Mammary epithelial cell (primary cell): ENCODE measurements at regions of chr11 and their contacts with region 1.

Region 1: GRCh38 chr11:94623120-94623735 is 56.1 kb downstream of the PIWIL4 start:
- DNase-seq: peak; percentile 70
- H3K4me3 ChIP-seq: no peak overlapping the region
- H3K27ac ChIP-seq: no peak overlapping the region
- H3K4me1 ChIP-seq: no peaks in the 10 kb centered on the region
- H3K27me3 ChIP-seq: no peaks in the 10 kb centered on the region
- CTCF ChIP-seq: peak; percentile 91 to 94

Region 2: GRCh38 chr11:94543695-94544645 is 79.3 kb before region 1 on chr11 and contains the start of gene FUT4:
- CTCF ChIA-PET with region 1: no interaction called
- dilution Hi-C with region 1: no loop called
- in situ Hi-C with region 1: no loop called
- intact Hi-C with region 1: no loop called
- DNase-seq: peak; percentile 70
- H3K4me3 ChIP-seq: peak within 1 kb of the TSS; percentile 32 to 49 (median 46)
- H3K27ac ChIP-seq: peak within 1 kb of the TSS; percentile 51
- H3K4me1 ChIP-seq: peaks cover 16% of the 10 kb centered on the region
- H3K27me3 ChIP-seq: no peaks in the 10 kb centered on the region
- CTCF ChIP-seq: no peak
- total RNA-seq, gene FUT4: 0.33 to 1.2 TPM

Region 3: GRCh38 chr11:94767761-94768601 is 144.8 kb after region 1 on chr11 and contains the start of gene AMOTL1:
- CTCF ChIA-PET with region 1: interaction called, 3 read pairs
- dilution Hi-C with region 1: no loop called
- in situ Hi-C with region 1: loop called in 1 of 2 experiments (anchors 5 kb)
- intact Hi-C with region 1: loop called (anchors 2 kb)
- DNase-seq: peak; percentile 87
- H3K4me3 ChIP-seq: peak within 1 kb of the TSS; percentile 52 to 89 (median 64)
- H3K27ac ChIP-seq: peak within 1 kb of the TSS; percentile 91
- H3K4me1 ChIP-seq: peaks cover 47% of the 10 kb centered on the region
- H3K27me3 ChIP-seq: no peaks in the 10 kb centered on the region
- CTCF ChIP-seq: peak in 1 of 2 donors; percentile 23
- total RNA-seq, gene AMOTL1: 181 to 201 TPM

Region 4: GRCh38 chr11:94897330-94897768 is 274.1 kb after region 1 on chr11:
- CTCF ChIA-PET with region 1: interaction called, 3 read pairs
- dilution Hi-C with region 1: no loop called
- in situ Hi-C with region 1: loop called in 1 of 2 experiments (anchors 25 kb)
- intact Hi-C with region 1: loop called (anchors 1 kb)
- DNase-seq: peak; percentile 21
- H3K4me3 ChIP-seq: no peak overlapping the region
- H3K27ac ChIP-seq: no peak overlapping the region
- H3K4me1 ChIP-seq: peaks cover 6% of the 10 kb centered on the region
- H3K27me3 ChIP-seq: no peaks in the 10 kb centered on the region
- CTCF ChIP-seq: peak; percentile 73 to 89

Region 5: DNA sequence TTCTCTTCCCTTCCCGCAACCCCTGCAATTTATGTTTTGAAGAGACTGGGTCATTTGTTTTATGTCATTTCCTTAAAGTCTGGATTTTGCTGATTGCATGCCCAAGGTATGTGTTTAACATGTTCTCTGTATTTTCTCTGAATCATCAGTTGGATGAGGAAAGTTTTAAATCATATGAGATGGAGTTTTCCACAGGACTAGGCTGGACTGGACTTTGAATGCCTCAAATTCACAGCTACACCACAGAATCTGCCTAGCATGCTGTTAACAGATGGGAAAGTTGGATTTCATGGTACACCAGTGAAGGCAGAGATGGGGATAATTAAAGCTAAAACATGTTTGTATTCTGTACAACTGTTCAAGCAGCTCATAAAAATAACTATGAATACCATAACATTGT is 287.6 kb after region 1 on chr11:
- CTCF ChIA-PET with region 1: no interaction called
- dilution Hi-C with region 1: no loop called
- in situ Hi-C with region 1: loop called in 1 of 2 experiments (anchors 25 kb)
- intact Hi-C with region 1: no loop called
- DNase-seq: no peak
- H3K4me3 ChIP-seq: no peak overlapping the region
- H3K27ac ChIP-seq: no peak overlapping the region
- H3K4me1 ChIP-seq: no peaks in the 10 kb centered on the region
- H3K27me3 ChIP-seq: no peaks in the 10 kb centered on the region
- CTCF ChIP-seq: no peak

Region 6: DNA sequence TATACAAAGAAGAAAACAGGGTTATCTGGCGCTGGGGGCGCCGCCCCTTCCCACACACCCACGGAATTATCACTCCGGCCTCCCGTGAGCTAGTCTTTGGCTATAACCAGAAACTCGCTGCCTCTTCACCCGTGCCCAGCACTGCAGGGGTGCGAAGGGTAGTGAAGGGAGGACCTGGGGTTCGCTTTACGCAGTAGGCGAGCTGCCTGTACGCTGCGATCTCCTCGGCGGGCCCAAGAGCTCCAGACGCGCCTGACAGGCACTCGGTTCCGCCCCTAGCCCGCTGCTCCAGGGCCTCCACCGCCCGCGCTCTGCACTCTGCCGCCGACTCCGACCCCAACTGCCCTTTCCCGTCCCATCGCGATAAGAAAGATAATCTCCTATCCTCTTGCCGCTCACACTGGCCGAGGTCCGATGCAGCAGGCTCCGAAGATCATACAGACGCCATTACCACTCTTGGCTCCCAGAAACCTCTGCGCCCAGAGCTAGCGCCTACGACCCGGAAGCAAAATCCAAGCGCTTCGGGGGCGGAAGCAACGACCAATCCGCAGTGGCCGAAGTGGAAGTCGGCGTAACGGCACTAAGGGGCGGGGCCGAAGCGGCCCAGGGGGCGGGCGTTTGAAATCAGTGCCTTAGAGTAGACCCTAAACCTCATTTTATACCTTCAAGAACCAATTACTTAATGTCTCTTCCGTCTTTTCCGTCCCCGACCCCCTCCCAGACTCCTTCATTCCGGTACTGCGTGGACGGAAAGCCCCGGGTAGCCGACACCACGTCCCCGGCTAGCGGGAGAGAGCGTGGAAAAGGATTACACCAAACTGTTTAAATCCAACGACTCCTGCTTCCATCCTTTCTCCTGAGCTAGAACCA is 350.1 kb after region 1 on chr11 and contains the starts of genes CWC15 and KDM4D:
- CTCF ChIA-PET with region 1: interaction called, 10 read pairs
- dilution Hi-C with region 1: no loop called
- in situ Hi-C with region 1: loop called in 1 of 2 experiments (anchors 10 kb)
- intact Hi-C with region 1: loop called (anchors 1 kb)
- DNase-seq: peak; percentile 90
- H3K4me3 ChIP-seq: peak within 1 kb of the TSS; percentile 86 to 99 (median 89)
- H3K27ac ChIP-seq: peak within 1 kb of the TSS; percentile 80
- H3K4me1 ChIP-seq: peaks cover 9% of the 10 kb centered on the region
- H3K27me3 ChIP-seq: no peaks in the 10 kb centered on the region
- CTCF ChIP-seq: no peak
- total RNA-seq, gene CWC15: 27.5 to 46.5 TPM
- total RNA-seq, gene KDM4D: 1.0 TPM

Region 7: DNA sequence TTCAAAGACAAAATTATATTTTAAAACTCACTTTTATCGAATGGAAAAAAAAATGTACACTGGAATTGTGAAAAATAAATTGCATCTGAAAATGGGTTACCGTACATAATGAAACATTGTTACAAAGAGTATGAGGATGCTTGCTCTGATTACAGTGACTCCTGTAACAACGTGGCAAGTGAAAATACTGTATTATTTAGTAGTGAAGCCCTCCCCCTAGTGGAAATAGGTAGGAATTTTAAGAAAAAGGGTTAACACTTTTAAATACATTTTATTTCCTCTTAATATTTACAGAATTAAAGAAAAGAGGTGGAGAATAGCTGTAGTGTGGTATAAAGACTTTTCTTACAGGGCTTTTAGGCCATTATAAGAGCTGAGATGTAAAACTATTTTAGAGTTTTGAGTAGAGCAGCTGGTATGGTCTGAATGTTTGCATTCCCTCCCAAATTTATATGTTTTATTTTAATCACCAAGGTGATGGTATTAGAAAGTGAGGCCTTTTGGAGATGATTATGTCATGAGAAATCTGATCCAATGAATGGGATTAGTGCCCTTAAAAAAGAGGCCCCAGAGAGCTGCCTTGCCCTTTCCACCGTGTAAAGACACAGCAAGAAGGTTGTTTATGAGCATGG is 1141.2 kb after region 1 on chr11:
- CTCF ChIA-PET with region 1: no interaction called
- dilution Hi-C with region 1: no loop called
- in situ Hi-C with region 1: loop called in 1 of 2 experiments (anchors 25 kb)
- intact Hi-C with region 1: no loop called
- DNase-seq: peak; percentile 37
- H3K4me3 ChIP-seq: no peak overlapping the region
- H3K27ac ChIP-seq: no peak overlapping the region
- H3K4me1 ChIP-seq: peaks cover 8% of the 10 kb centered on the region
- H3K27me3 ChIP-seq: no peaks in the 10 kb centered on the region
- CTCF ChIP-seq: peak; percentile 45 to 61

Region 8: DNA sequence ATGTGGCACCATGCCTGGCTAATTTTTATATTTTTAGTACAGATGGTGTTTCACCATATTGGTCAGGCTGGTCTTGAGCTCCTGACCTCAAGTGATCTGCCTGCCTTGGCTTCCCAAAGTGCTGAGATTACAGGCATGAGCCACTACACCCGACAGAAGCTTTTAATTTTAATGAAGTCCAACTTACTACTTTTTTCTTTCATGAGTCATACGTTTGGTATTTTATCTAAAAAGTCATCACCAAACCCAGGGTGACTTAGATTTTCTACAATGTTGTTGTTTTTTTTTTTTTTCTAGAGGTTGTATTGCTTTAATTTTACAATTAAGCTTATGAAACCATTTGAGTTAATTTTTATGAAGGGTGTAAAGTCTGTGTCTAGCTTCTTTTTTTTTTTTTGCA is 1801.5 kb after region 1 on chr11:
- CTCF ChIA-PET with region 1: no interaction called
- dilution Hi-C with region 1: no loop called
- in situ Hi-C with region 1: no loop called
- intact Hi-C with region 1: loop called (anchors 5 kb)
- DNase-seq: no peak
- H3K4me3 ChIP-seq: no peak overlapping the region
- H3K27ac ChIP-seq: no peak overlapping the region
- H3K4me1 ChIP-seq: peaks cover 3% of the 10 kb centered on the region
- H3K27me3 ChIP-seq: no peaks in the 10 kb centered on the region
- CTCF ChIP-seq: no peak